ENCODE measurements at regions of chr12 and their contacts with region 1.

Region 1: GRCh38 chr12:113030875-113031525 is 25.5 kb upstream of the DTX1 start:
- H3K4me3 ChIP-seq: no peak overlapping the region
- H3K27ac ChIP-seq: no peak overlapping the region
- H3K4me1 ChIP-seq: no peaks in the 10 kb centered on the region
- CTCF ChIP-seq: peak; percentile 48; the same call in 1 of the 2 replicates

Region 2: GRCh38 chr12:113005754-113006153 is 25.2 kb before region 1 on chr12:
- CTCF ChIA-PET with region 1: interaction called, 14 read pairs
- POLR2A ChIA-PET with region 1: no interaction called
- H3K4me3 ChIP-seq: no peak overlapping the region
- H3K27ac ChIP-seq: no peak overlapping the region
- H3K4me1 ChIP-seq: no peaks in the 10 kb centered on the region
- CTCF ChIP-seq: 0 out of 2 replicates have a peak, but pooled peaks have one; percentile 15

Measured in HEK293 (cell line).